Activated CD4-positive, alpha-beta T cell treated with anti-CD3 and anti-CD28 coated beads, Interleukin-2, amount 10 ng/mL, durations not matched to agents 24 days and 14 days (primary cell): ENCODE measurements at regions of chr12 and their contacts with region 1.

Region 1: DNA sequence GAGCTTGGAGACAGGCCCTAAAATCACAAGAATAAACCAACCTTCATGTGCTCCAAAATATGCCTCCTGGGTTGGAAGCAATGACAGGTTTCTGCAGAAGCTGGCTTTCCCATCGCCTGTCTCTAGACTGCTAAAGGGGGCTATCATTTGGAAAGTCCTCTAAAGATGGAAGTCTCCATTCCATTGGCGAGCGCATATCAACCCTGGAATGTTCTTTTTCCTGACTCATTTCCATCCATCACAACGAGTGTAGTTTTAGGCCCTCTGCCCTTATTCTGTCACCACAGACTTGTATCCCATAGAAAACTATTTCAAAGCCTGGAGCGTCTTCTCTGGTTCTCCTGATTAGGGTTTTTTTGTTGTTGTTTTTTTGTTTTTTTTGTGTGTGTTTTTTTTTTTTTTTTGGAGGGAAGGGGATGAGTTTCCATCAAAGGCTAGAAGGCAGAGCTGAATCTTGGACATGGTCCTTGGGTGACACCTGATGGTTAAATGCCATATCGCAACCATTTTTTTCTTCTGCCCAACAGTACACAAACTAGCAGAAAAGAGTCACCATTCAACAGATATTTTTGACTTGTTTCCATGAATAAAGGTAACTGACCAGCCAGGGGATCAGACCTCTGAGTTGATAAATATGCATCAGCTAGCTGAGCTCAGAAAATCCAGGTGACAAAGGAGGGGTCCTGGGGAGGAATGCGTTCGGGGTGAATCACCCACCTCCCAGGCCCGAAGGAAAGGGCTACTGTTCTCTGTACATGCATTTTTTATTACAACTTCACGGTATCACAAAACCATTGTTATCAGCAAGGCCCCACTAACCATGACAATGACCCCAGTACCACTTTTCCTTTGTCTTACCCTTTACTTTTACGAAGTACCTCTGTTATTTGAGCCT is 40.5 kb downstream of the KCNA5 start:
- DNase-seq: peak; percentile 79
- H3K4me3 Mint-ChIP-seq: no peak overlapping the region
- H3K27ac Mint-ChIP-seq: no peak overlapping the region
- H3K4me1 Mint-ChIP-seq: no peaks in the 10 kb centered on the region
- H3K27me3 Mint-ChIP-seq: peaks cover 4% of the 10 kb centered on the region

Region 2: GRCh38 chr12:4857472-4858291 is 226.5 kb before region 1 on chr12:
- intact Hi-C with region 1: loop called (anchors 1 kb)
- DNase-seq: peak; percentile 93
- H3K4me3 Mint-ChIP-seq: peak overlapping the region; percentile 77
- H3K27ac Mint-ChIP-seq: no peak overlapping the region
- H3K4me1 Mint-ChIP-seq: peaks cover 20% of the 10 kb centered on the region
- H3K27me3 Mint-ChIP-seq: peaks cover 33% of the 10 kb centered on the region

Region 3: GRCh38 chr12:5022465-5023061 is 61.6 kb before region 1 on chr12:
- intact Hi-C with region 1: loop called (anchors 1 kb)
- DNase-seq: peak; percentile 78
- H3K4me3 Mint-ChIP-seq: no peak overlapping the region
- H3K27ac Mint-ChIP-seq: no peak overlapping the region
- H3K4me1 Mint-ChIP-seq: no peaks in the 10 kb centered on the region
- H3K27me3 Mint-ChIP-seq: peaks cover 12% of the 10 kb centered on the region